ENCODE measurements at regions of chr9 and their contacts with region 1.

Region 1: DNA sequence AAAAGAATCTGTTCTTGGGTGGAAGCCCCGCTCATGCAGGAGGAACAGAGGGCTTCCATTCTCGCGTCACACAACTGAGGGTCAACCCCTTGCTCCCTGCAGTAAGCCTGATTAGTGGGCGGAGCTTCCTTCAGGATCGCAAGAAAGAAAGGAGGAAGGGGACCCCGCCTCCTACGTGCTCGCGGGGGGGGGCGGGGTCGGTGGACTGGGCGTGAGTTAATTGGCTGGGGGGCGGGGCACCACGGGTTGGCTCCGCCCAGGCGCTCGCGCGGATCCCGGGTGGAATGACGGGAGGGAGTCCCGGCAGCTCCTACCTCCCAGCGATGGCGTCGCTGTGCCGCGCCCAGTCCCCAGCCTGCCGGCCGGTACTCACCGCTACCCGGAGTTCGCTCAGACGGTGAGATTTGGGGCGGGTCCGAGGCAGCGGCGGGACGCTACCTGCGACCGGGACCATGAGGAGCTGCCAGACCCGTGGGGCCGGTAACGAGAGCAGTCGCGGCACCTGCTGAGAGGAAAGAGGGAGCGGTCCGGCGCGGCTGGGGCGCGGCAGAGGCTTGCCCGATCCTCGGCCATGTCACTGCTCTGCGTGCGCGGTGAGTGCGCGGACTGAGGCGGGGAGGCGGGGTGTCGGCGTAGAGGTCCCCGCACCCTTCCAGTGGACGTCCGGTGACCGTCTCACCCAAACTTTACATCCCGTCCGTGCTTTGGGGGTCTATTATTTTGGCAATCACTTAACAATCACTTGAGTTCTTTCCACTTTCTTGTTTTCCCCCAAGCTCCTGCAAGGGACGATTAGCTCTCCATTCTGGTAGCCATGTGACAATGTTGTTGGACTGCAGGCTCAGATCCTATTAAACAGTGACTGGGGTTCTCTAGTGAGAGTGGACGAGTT is at the start of gene UNC13B:
- DNase-seq: peak; percentile 94
- H3K4me3 ChIP-seq: peak within 1 kb of the TSS; percentile 75 to 93 (median 84)
- H3K27ac ChIP-seq: peak within 1 kb of the TSS in 7 of 8 donors; percentile 75 to 91 (median 88)
- H3K4me1 ChIP-seq: peaks cover 5 to 42% (median 24%) of the 10 kb centered on the region in 6 donors
- H3K27me3 ChIP-seq: peaks cover 0 to 6% (median 0%) of the 10 kb centered on the region in 7 donors
- CTCF ChIP-seq: peak in 2 of 11 experiments; percentile 18 to 19
- POLR2A ChIP-seq: no peak
- total RNA-seq, gene UNC13B: 10.7 to 18.7 (median 14.2) TPM

Region 2: GRCh38 chr9:34759432-34760134 is 402.4 kb before region 1 on chr9:
- intact Hi-C with region 1: no loop called
- DNase-seq: no peak
- H3K4me3 ChIP-seq: no peak overlapping the region
- H3K27ac ChIP-seq: no peak overlapping the region
- H3K4me1 ChIP-seq: peaks cover 0 to 7% (median 0%) of the 10 kb centered on the region in 6 donors
- H3K27me3 ChIP-seq: peaks cover 0 to 34% (median 5%) of the 10 kb centered on the region in 7 donors
- CTCF ChIP-seq: no peak
- POLR2A ChIP-seq: no peak

Region 3: DNA sequence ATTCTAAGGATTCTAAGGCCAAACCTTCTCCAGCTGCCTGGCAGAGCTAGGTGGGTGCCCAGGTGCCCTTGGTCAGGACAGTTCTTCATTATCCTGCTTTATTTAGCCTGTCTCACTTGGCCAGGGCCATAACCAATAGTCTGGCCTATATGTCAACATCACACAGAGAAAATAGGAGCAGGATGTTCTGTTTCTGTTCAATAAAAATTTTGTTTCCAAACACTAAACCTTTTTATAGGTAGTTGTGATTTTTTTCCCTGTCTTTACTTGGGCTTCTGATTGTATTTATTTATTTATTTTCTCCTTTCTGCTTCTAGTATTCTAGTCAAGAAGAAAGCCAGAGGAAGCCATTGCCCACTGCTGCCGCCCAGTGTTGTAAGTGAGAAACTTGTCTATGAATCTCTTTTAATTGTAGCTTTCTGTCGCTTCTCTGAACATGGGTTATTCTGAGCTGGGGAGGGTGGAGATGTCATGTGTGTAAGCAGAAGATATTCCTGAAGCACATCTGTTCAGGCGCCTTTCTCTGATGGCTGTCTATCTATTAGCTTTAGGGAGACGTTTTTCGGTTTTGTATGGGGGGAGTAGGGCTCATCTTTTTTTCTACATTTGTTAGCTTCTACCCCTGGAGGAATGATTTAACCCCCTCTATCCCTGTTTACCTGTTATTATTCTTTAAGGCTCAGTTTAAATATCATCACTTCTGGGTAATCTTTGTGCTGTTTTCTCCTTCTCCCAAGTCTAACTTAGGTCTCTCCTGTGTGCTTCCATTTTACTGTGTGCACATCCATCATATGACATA is 96.9 kb after region 1 on chr9:
- intact Hi-C with region 1: loop called (anchors 10 kb)
- DNase-seq: no peak
- H3K4me3 ChIP-seq: no peak overlapping the region
- H3K27ac ChIP-seq: peak overlapping the region in 2 of 8 donors; percentile 11 to 37
- H3K4me1 ChIP-seq: peaks cover 0 to 14% (median 2%) of the 10 kb centered on the region in 6 donors
- H3K27me3 ChIP-seq: no peaks in the 10 kb centered on the region
- CTCF ChIP-seq: peak in 10 of 11 experiments; percentile 16 to 60 (median 52)
- POLR2A ChIP-seq: no peak